ENCODE measurements at regions of chr20 and their contacts with region 1.

Region 1: GRCh38 chr20:38962044-38962927 is at the start of gene DHX35:
- DNase-seq: peak; percentile 99
- H3K4me3 Mint-ChIP-seq: peak within 1 kb of the TSS; percentile 88
- H3K27ac Mint-ChIP-seq: peak within 1 kb of the TSS; percentile 80
- H3K4me1 Mint-ChIP-seq: peaks cover 31% of the 10 kb centered on the region
- H3K27me3 Mint-ChIP-seq: no peaks in the 10 kb centered on the region
- total RNA-seq, gene DHX35: 7.1 to 7.2 TPM

Region 2: DNA sequence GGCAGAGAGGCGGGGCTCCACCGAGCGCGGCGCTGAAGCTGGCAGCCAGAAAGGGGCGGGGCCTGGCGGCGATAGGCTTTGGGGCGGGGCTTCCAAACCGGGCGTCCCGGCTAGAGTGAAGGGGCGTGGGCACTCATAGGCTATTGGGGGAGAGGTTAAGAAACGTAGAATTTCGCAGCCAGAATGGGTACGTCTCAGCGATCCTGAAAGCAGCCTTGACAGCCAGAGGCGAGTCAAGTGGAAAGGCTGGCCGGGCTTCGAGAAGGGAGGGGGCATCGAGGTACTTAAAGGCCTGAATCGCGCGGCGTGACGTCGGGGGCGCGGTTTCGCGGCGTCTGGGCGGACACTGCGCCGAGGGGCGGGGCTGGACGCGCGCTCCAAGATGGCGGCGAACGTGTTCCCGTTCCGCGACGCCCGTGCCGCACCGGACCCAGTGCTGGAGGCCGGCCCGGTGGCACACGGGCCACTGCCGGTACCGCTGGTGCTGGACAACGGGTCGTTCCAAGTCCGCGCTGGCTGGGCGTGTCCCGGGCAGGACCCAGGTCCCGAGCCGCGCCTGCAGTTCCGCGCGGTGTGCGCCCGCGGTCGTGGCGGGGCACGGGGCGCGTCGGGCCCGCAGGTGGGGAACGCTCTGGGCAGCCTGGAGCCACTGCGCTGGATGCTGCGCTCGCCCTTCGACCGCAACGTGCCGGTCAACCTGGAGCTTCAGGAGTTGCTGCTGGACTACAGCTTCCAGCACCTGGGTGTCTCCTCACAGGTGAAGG is 214.0 kb before region 1 on chr20 and contains the start of gene ACTR5:
- CTCF ChIA-PET with region 1: interaction called, 7 read pairs
- POLR2A ChIA-PET with region 1: interaction called, 11 read pairs
- DNase-seq: peak; percentile 97
- H3K4me3 Mint-ChIP-seq: peak within 1 kb of the TSS; percentile 94
- H3K27ac Mint-ChIP-seq: peak within 1 kb of the TSS; percentile 92
- H3K4me1 Mint-ChIP-seq: peaks cover 27% of the 10 kb centered on the region
- H3K27me3 Mint-ChIP-seq: peaks cover 9% of the 10 kb centered on the region
- total RNA-seq, gene ACTR5: 9.4 to 9.9 TPM

Region 3: DNA sequence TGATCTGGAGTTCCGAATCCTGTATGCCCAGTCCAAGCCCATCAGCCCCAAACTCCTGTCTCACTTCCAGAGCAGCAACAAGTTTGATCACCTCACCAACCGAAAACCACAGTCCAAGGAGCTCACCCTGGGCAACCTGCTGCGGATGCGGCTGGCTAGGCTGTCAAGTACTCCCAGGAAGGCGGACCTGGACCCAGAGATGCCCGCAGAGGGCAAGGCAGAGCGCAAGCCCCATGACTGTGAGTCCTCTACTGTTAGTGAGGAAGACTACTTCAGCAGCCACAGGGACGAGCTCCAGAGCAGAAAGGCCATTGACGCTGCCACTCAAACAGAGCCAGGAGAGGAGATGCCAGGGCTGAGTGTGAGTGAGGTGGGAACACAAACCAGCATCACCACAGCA is 10.7 kb before region 1 on chr20:
- CTCF ChIA-PET with region 1: interaction called, 3 read pairs
- POLR2A ChIA-PET with region 1: interaction called, 21 read pairs
- DNase-seq: no peak
- H3K4me3 Mint-ChIP-seq: no peak overlapping the region
- H3K27ac Mint-ChIP-seq: no peak overlapping the region
- H3K4me1 Mint-ChIP-seq: no peaks in the 10 kb centered on the region
- H3K27me3 Mint-ChIP-seq: no peaks in the 10 kb centered on the region

Region 4: GRCh38 chr20:38997622-38998021 is 35.3 kb after region 1 on chr20:
- CTCF ChIA-PET with region 1: interaction called, 22 read pairs
- POLR2A ChIA-PET with region 1: interaction called, 9 read pairs
- DNase-seq: peak; percentile 53
- H3K4me3 Mint-ChIP-seq: no peak overlapping the region
- H3K27ac Mint-ChIP-seq: peak overlapping the region; percentile 24
- H3K4me1 Mint-ChIP-seq: peaks cover 23% of the 10 kb centered on the region
- H3K27me3 Mint-ChIP-seq: no peaks in the 10 kb centered on the region

Region 5: GRCh38 chr20:39025883-39026282 is 63.6 kb after region 1 on chr20:
- CTCF ChIA-PET with region 1: interaction called, 7 read pairs
- POLR2A ChIA-PET with region 1: interaction called, 11 read pairs
- DNase-seq: peak; percentile 62
- H3K4me3 Mint-ChIP-seq: peak overlapping the region; percentile 9
- H3K27ac Mint-ChIP-seq: peak overlapping the region; percentile 78
- H3K4me1 Mint-ChIP-seq: peaks cover 51% of the 10 kb centered on the region
- H3K27me3 Mint-ChIP-seq: no peaks in the 10 kb centered on the region